PC-9 (cell line): ENCODE measurements at regions of chr16 and their contacts with region 1.

Region 1: GRCh38 chr16:24609740-24610415 is 70.5 kb downstream of the RBBP6 start:
- DNase-seq: peak in 1 of 2 experiments; percentile 19
- H3K4me3 ChIP-seq: no peak overlapping the region
- H3K27ac ChIP-seq: no peak overlapping the region
- H3K4me1 ChIP-seq: no peaks in the 10 kb centered on the region
- H3K27me3 ChIP-seq: 0 out of 2 replicates have a peak, but pooled peaks cover 5% of the 10 kb centered on the region
- CTCF ChIP-seq: no peak

Region 2: DNA sequence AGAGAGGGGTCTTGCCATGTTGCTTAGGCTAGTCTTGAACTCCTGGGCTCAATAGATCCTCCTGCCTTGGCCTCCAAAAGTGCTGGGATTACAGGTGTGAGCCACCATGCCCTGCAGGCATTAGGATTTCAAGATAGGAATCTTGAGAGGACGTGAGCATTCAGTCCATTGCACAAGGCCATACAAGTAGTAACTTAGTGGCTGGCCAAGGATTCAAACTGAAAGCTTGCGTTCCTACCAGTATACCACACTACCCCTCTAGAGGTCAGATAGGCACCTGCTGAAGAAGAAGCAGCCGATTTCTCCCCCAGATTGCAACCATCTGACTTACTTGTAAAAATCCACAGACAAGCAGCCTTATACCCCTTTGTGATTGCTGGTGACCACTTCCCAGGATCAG is 272.9 kb before region 1 on chr16:
- CTCF ChIA-PET with region 1: no interaction called
- POLR2A ChIA-PET with region 1: no interaction called
- intact Hi-C with region 1: no loop called
- DNase-seq: no peak
- H3K4me3 ChIP-seq: no peak overlapping the region
- H3K27ac ChIP-seq: no peak overlapping the region
- H3K4me1 ChIP-seq: no peaks in the 10 kb centered on the region
- H3K27me3 ChIP-seq: peaks cover 41% of the 10 kb centered on the region
- CTCF ChIP-seq: no peak

Region 3: GRCh38 chr16:24577167-24577566 is 32.7 kb before region 1 on chr16:
- CTCF ChIA-PET with region 1: no interaction called
- POLR2A ChIA-PET with region 1: no interaction called
- intact Hi-C with region 1: no loop called
- DNase-seq: no peak
- H3K4me3 ChIP-seq: no peak overlapping the region
- H3K27ac ChIP-seq: no peak overlapping the region
- H3K4me1 ChIP-seq: no peaks in the 10 kb centered on the region
- H3K27me3 ChIP-seq: no peaks in the 10 kb centered on the region
- CTCF ChIP-seq: no peak

Region 4: DNA sequence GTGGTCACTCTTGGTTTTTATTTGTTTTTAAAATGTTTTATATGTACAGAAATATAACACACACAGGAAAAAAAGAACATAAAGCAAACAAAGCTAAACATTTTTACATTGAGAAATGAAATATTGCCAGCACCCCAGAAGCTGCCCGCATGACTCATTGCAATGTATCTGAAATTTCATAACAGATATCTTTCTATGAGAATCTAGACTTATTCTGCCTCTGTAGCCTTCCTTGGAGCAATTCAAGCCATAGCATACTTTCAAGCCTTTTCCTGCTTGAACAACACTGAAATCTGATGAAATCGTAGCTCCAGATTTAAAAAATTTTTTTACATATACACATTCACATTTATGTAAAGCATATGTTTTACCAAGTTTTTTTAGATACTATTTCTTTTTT is 16.4 kb after region 1 on chr16:
- CTCF ChIA-PET with region 1: no interaction called
- POLR2A ChIA-PET with region 1: interaction called, 10 read pairs
- intact Hi-C with region 1: no loop called
- DNase-seq: peak in 1 of 2 experiments; percentile 71
- H3K4me3 ChIP-seq: no peak overlapping the region
- H3K27ac ChIP-seq: peak overlapping the region; percentile 52
- H3K4me1 ChIP-seq: peaks cover 12% of the 10 kb centered on the region
- H3K27me3 ChIP-seq: no peaks in the 10 kb centered on the region
- CTCF ChIP-seq: no peak

Region 5: GRCh38 chr16:24748242-24748641 is 138.4 kb after region 1 on chr16:
- CTCF ChIA-PET with region 1: no interaction called
- POLR2A ChIA-PET with region 1: interaction called, 10 read pairs
- intact Hi-C with region 1: no loop called
- DNase-seq: peak; percentile 40 to 59
- H3K4me3 ChIP-seq: no peak overlapping the region
- H3K27ac ChIP-seq: peak overlapping the region; percentile 42
- H3K4me1 ChIP-seq: peaks cover 15% of the 10 kb centered on the region
- H3K27me3 ChIP-seq: no peaks in the 10 kb centered on the region
- CTCF ChIP-seq: no peak

Region 6: DNA sequence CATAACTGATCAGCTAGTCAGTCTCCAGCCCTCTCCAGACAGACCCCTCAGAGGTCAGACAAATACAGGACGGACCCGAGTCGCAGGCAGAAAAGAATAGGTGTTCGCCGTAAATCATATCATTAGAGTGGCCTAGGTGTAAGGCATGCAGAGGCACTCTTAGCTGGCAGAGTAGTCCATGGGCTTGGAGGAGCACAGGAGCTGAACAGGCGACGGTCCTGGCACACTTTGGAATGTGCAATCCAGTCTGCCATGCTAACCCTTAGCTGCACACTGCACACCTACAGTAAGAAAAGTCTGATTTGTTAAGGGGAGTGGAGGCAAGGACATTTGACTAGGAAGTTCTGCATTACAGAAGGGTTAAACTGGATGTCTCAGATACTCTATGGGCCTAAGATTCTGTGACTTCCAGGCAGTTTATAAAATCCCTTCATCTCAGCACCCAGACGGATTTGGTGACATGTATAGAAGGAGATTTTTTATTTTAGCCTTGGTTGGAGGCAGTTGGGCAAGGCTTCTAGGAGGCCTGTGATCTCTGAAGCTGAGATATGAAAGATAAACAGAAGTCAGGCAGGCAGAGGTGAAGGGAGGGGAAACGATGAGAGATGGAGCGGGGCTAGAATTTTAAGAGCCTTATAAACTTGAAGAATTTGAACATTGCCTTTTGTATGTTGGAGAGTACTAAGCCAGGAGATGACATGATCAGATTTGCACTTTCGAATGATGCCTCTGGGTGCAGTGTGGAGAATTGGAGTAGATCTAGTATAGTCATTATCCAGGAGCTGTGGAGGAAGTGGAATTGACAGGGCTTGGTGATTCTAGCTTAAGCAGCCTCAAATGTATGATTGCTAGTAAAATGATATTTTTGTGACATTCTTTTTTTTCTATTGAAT is 201.3 kb after region 1 on chr16:
- CTCF ChIA-PET with region 1: no interaction called
- POLR2A ChIA-PET with region 1: no interaction called
- intact Hi-C with region 1: no loop called
- DNase-seq: no peak
- H3K4me3 ChIP-seq: no peak overlapping the region
- H3K27ac ChIP-seq: no peak overlapping the region
- H3K4me1 ChIP-seq: no peaks in the 10 kb centered on the region
- H3K27me3 ChIP-seq: no peaks in the 10 kb centered on the region
- CTCF ChIP-seq: no peak